ENCODE measurements at regions of chr4 and their contacts with region 1.

Region 1: DNA sequence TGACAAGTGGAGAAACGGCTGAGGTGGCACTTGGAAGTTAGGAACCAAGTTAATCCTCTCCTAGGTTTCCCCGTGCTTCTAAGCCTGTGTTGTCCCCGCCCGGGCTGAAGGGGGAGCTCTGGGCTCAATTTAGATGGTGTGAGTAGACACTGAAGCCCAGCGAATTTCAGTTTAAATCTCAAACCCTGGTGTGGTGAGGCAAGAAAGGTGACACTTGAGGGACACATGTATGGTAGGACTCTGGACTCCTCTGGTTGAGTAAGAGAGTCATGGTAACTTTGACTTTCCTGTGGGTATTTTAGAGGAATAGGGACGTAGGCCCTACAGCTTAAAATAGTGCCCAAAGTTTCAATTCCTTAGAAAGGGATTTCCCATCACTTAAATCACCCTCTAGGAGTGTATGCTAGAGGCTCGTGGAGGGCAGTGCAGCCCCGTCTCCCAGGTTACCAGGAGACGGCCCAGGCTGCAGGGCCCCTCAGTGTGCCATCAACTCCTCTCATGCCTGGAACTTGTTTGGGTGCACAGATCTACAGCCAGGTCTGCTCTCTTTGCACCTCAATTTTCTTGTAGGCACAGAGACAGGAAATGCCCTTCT is 24.0 kb downstream of the HAND2 start:
- DNase-seq: no peak
- H3K4me3 ChIP-seq: no peak overlapping the region
- H3K27me3 ChIP-seq: peaks cover 4% of the 10 kb centered on the region
- CTCF ChIP-seq: peak; percentile 91

Region 2: GRCh38 chr4:173420324-173420752 is 85.7 kb before region 1 on chr4:
- CTCF ChIA-PET with region 1: interaction called, 45 read pairs
- POLR2A ChIA-PET with region 1: no interaction called
- DNase-seq: no peak
- H3K4me3 ChIP-seq: no peak overlapping the region
- H3K27me3 ChIP-seq: no peaks in the 10 kb centered on the region
- CTCF ChIP-seq: peak; percentile 38

Region 3: GRCh38 chr4:173522123-173522950 is 16.3 kb after region 1 on chr4:
- CTCF ChIA-PET with region 1: interaction called, 11 read pairs
- POLR2A ChIA-PET with region 1: interaction called, 3 read pairs
- DNase-seq: peak; percentile 47
- H3K4me3 ChIP-seq: peak overlapping the region; percentile 57
- H3K27me3 ChIP-seq: no peaks in the 10 kb centered on the region; the same call in 1 of the 2 replicates
- CTCF ChIP-seq: 0 out of 2 replicates have a peak, but pooled peaks have one; percentile 32

Region 4: GRCh38 chr4:173573286-173573685 is 67.3 kb after region 1 on chr4:
- CTCF ChIA-PET with region 1: no interaction called
- POLR2A ChIA-PET with region 1: no interaction called
- DNase-seq: no peak
- H3K4me3 ChIP-seq: no peak overlapping the region
- H3K27me3 ChIP-seq: no peaks in the 10 kb centered on the region
- CTCF ChIP-seq: no peak

Region 5: DNA sequence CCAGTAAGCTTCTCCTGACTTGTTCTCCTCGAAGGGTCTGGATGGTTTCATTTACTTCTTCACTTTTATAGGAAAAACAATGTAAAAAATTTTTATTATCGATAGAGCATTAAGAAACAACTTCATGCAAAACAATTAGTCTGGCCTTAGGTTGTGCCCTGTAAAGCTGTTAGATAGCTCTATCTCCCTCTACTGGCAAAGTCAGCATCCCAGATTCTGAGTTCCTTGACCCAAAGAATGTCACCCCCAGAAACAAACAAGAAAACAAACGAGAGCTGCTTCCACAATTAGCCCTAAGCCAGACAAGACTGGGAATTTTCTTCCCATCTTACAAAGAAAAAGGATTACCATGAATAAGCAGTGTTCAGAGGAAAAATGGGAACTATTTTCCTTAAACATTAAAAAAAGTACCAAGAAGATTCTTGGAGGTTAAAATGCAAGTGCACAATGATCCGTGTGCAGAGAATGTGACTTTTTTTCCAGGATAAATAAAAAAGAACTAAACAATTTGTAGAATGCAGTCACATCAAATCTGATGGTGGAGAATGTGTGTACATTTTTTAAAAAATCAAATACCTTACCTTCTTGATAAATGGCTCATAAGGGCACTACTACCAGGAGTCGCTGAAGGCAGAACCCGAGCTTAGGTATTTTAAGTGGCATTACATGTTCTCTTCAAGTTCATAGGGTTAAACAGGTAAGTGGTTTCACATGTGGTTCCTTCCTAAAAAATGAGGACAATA is 484.3 kb after region 1 on chr4:
- CTCF ChIA-PET with region 1: interaction called, 19 read pairs
- POLR2A ChIA-PET with region 1: no interaction called
- DNase-seq: no peak
- H3K4me3 ChIP-seq: no peak overlapping the region
- H3K27me3 ChIP-seq: no peaks in the 10 kb centered on the region
- CTCF ChIP-seq: peak; percentile 70

Region 6: DNA sequence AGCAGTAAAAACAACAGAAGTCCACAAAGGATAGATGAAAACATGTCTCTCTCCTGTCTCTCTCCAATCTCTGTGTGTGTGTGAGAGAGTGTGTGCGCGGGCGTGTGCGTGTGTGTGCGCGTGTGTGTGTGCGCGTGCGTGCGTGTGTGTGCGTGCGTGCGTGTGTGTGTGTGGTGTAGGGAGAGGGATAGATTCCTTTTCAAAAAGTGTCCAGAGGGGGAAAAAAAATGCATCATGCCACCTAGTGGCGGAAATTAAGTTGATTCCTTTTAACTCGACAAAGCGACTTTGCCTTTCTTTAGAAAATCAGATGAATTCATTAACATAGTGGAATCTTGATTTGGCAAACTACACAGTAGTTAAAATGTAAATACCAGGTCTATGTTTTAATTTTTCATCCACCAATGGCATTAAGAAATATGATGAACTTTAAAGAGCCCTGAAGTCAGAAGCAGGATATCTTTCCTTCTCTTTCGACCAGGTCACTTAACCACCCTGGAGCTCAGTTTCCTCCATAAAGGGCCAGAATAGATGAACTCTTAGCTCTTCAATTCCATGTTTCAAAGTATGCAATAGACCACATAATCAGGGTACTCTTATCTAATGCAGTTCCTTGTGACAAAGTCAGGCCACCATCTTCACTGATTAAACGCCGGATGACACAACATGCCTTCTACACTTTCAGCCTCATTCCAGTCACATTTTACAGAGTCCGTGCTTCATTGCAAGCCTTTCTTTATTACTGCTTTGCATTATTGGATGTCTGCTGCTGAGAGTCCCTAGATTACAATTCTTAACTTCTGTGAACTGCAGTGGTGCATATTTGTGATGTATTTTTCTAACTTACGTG is 614.6 kb after region 1 on chr4:
- CTCF ChIA-PET with region 1: interaction called, 12 read pairs
- POLR2A ChIA-PET with region 1: no interaction called
- DNase-seq: peak; percentile 20
- H3K4me3 ChIP-seq: peak overlapping the region; percentile 53
- H3K27me3 ChIP-seq: peaks cover 1% of the 10 kb centered on the region; the same call in 1 of the 2 replicates
- CTCF ChIP-seq: peak; percentile 56